WTC11 (cell line): ENCODE measurements at regions of chr7 and their contacts with region 1.

Region 1: DNA sequence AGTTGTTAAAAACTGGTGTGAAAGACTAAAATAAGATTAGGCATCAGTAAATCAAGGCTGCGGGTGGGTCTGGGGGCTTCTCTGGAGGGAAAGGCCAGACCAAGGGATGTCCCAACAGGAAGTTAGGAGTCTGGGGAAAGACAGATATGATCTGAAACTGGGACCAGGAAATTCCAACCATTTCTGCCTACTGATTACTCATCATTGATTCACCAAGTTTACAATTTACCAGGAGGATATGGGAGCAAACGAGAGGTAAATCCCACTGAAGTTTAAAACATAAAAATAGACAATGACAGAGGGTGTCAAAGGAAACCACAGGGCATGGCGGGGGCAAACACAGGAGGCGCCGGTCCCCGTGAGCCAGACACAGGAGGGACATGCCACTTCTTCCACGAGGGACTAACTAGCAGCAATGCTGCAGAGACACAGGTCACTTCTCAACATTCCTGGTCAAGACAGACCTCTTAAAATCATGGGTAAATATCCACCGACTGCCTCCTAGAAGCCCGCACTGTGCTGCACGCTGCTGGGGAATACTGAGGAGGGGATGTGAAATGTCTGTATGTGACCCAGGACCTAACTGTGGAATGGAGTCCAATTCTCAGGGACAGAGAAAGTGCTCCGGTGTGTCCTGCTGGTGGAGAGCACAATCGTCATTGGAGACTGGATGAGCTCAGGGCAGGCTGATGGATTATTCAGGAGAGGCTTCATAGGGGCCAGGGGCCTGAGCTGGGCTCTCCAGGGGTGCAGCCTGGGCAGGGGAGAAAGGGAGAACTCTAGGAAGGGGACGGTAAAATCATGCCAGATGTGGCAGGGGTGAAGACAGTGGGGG is 153.4 kb upstream of the KLF14 start:
- DNase-seq: no peak
- ATAC-seq: no peak
- H3K4me3 Mint-ChIP-seq: no peak overlapping the region
- H3K27ac Mint-ChIP-seq: 0 out of 2 replicates have a peak overlapping the region, but pooled peaks have one; percentile 36
- H3K4me1 Mint-ChIP-seq: peaks cover 12% of the 10 kb centered on the region
- H3K27me3 Mint-ChIP-seq: no peaks in the 10 kb centered on the region
- CTCF ChIP-seq: no peak

Region 2: DNA sequence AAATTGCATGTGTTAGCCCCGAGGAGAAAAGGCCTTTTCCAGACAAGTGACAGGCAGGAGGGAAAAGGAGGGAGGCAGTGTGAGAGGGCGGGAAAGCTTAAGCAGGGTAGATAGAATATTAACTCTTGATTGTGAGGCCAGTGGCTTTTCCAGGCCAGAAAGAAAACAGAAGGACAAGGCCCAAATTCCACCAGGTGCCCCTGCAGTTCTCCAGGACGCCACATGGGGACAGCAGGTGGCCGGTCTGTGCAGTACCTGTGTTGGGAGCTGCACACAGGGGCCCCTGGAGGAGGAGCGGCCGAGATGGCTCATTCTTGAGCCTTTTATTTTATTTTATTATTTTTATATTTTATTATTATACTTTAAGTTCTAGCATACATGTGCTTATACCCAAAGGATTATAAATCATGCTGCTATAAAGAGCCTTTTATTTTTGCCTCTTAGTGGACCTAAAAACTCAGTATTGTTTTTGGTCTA is 12.1 kb before region 1 on chr7:
- CTCF ChIA-PET with region 1: interaction called, 20 read pairs
- POLR2A ChIA-PET with region 1: interaction called, 3 read pairs
- DNase-seq: peak; percentile 88
- ATAC-seq: peak; percentile 88
- H3K4me3 Mint-ChIP-seq: no peak overlapping the region
- H3K27ac Mint-ChIP-seq: no peak overlapping the region; the same call in 1 of the 2 replicates
- H3K4me1 Mint-ChIP-seq: peaks cover 38% of the 10 kb centered on the region
- H3K27me3 Mint-ChIP-seq: no peaks in the 10 kb centered on the region; the same call in 1 of the 2 replicates
- CTCF ChIP-seq: peak; percentile 95

Region 3: GRCh38 chr7:130961128-130961601 is 73.8 kb after region 1 on chr7:
- CTCF ChIA-PET with region 1: no interaction called
- POLR2A ChIA-PET with region 1: no interaction called
- DNase-seq: no peak
- ATAC-seq: no peak
- H3K4me3 Mint-ChIP-seq: no peak overlapping the region
- H3K27ac Mint-ChIP-seq: peak overlapping the region; percentile 52; the same call in 1 of the 2 replicates
- H3K4me1 Mint-ChIP-seq: no peaks in the 10 kb centered on the region; the same call in 1 of the 2 replicates
- H3K27me3 Mint-ChIP-seq: no peaks in the 10 kb centered on the region
- CTCF ChIP-seq: no peak